Dorsolateral prefrontal cortex (tissue), 120 donors: ENCODE measurements at regions of chr2 and their contacts with region 1.

Region 1: DNA sequence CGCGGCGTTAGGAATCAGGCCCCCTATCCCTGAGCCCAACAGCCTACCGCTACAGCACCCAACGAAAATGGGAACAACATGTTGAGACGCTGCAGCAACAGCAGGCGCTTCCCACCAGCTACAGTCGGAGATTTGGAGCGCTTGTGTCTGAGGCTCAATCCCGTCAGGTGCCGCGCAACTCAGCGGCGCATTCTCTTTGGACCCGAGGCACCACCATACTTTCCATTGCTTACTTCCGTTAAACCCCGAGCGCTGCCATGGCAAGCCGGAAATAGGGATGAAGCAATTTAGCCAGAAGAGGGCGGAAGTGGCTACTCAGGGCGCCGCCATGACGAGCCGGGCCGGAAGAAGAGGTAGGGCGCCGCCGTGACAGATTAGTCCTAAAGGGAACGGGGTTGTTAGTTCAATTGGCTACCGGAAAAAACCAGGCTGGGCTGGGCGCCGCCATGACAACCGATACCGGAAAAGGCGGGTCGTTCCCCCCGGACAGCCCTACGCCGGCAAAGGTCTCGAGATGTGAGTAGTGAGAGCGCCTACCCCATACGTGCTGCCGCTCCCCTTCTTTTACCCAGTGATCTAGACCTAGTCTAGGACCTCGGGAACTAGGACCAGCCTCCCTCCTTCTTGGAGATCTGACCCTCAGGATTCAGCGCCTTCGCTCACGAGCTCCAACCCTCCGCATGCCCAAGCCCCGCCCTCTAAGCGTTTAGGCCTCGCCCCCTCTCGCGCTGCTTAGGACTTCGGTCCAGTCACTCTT is at the start of gene CHCHD5:
- DNase-seq: peak; percentile 89 to 99 (median 96)
- H3K4me3 ChIP-seq: peak within 1 kb of the TSS; percentile 52 to 95 (median 81)
- H3K27ac ChIP-seq: peak within 1 kb of the TSS; percentile 72 to 99 (median 96)
- H3K27me3 ChIP-seq: no peaks in the 10 kb centered on the region
- CTCF ChIP-seq: peak in 55 of 56 donors; percentile 38 to 83 (median 64)
- total RNA-seq, gene CHCHD5: 8.2 to 25.8 (median 17.1) TPM

Region 2: DNA sequence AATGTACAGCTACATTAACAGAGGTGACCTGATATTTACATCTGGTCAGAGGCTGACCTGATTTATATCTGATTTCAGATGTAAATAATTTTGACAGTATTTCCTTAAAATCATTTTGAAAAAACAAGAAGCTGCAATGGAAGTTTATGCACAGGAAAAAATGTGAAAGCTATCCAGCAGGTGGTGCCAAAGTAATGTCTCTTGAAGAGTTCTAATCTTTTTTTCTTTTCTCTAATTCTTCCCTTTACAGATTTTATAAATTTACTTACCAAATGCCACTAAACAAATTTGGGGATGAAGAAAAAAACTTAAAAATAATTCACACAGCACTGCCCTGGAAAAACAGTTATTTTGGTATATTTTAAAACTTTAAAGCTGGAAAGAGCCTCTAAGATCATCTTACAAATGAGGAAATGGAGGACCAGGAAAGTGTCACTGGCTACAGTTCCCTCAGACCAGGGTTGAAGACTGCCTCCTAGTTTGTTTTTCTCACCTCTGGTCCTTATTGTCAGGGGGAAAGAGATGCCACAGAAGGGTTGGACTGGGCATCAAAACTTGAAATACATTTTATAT is 462.5 kb before region 1 on chr2:
- intact Hi-C with region 1: loop called in 1 of 2 experiments (anchors 5 kb)
- DNase-seq: no peak
- H3K4me3 ChIP-seq: no peak overlapping the region
- H3K27ac ChIP-seq: no peak overlapping the region
- H3K27me3 ChIP-seq: no peaks in the 10 kb centered on the region
- CTCF ChIP-seq: peak; percentile 48 to 82 (median 70)

Region 3: DNA sequence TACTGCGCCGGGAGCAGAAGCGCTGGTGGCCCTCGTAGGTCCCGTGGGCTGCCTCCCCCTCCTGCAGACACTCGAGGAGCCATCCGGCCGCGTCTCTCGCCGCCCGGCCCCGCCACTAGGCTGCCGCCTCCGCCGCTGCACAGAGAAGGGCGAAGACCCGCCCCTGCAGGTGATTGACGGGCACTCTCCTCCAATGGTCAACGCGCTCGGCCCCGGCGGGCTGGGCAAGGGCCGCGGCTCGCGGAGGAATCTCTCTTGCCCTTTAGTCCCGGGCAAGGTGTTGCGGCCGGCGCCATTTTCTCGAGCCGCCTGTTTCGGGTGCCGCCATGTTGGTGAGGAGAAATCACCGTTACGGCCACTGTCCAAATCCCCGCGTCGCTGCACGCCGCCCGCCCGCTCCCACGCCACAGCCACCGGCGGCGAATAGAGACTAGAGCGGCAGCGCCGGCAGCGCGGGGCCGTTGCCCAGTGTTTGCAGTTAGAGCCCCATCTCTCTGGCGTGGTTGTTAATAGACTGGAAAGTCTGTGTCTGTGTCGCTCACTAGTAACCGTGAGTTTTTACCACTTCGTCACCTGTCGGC is 308.9 kb before region 1 on chr2 and contains the start of gene ZC3H6:
- intact Hi-C with region 1: loop called (anchors 5 kb)
- DNase-seq: peak; percentile 97 to 100 (median 99)
- H3K4me3 ChIP-seq: peak within 1 kb of the TSS; percentile 68 to 99 (median 90)
- H3K27ac ChIP-seq: peak within 1 kb of the TSS; percentile 98 to 100 (median 100)
- H3K27me3 ChIP-seq: no peaks in the 10 kb centered on the region
- CTCF ChIP-seq: peak in 49 of 56 donors; percentile 9 to 68 (median 42)
- total RNA-seq, gene ZC3H6: 20.4 to 50.4 (median 36.4) TPM

Region 4: DNA sequence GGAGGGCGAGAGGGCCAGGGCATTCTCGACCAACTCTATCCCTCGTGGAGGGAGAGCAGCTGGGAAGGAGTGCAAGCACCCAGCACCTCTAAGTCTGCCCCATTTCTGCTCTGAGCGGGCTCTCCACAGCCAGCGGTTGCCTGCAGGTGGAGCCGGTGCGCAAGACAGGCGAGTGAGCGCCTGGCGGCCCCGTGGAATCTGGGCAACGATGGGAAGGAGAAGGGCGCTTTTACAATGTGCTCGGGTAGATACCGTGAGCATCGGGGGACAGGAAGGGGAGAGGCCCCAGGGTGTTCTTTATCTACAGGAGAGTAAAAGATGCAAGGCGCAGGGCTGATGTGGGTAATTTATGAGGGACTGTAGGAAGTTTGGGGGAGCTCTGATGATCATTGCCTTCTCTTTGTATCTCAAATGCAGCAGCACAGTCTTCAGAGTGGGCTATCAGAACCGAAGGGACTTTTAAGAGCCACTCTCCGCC is 103.2 kb before region 1 on chr2:
- intact Hi-C with region 1: loop called (anchors 1 kb)
- DNase-seq: peak; percentile 77 to 92 (median 86)
- H3K4me3 ChIP-seq: peak overlapping the region; percentile 57 to 97 (median 83)
- H3K27ac ChIP-seq: peak overlapping the region; percentile 74 to 97 (median 91)
- H3K27me3 ChIP-seq: no peaks in the 10 kb centered on the region
- CTCF ChIP-seq: peak; percentile 51 to 95 (median 83)

Region 5: DNA sequence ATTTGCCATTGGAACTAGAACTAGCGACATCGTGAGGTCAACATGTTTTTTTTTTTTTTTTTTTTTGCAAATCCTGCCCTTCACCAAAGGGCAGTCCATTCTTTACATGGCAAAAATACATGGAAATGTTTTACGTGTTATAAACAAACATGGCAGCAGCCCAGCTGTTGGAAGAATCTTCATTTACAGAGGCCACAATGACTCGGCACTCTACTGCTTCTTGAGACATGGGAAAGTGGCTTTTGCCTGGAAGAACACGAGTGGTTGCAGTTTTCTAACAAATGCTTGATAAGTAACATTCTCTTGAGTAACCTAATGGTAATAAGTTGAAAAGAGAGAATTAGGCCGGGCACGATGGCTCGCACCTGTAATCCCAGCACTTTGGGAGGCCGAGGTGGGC is 64.8 kb before region 1 on chr2:
- intact Hi-C with region 1: no loop called
- DNase-seq: no peak
- H3K4me3 ChIP-seq: no peak overlapping the region
- H3K27ac ChIP-seq: no peak overlapping the region
- H3K27me3 ChIP-seq: no peaks in the 10 kb centered on the region
- CTCF ChIP-seq: no peak

Region 6: GRCh38 chr2:112645310-112646101 is 61.2 kb after region 1 on chr2 and contains the start of gene SLC20A1:
- intact Hi-C with region 1: loop called (anchors 5 to 10 kb)
- DNase-seq: peak; percentile 93 to 100 (median 97)
- H3K4me3 ChIP-seq: peak within 1 kb of the TSS; percentile 71 to 99 (median 93)
- H3K27ac ChIP-seq: peak within 1 kb of the TSS; percentile 86 to 99 (median 97)
- H3K27me3 ChIP-seq: no peaks in the 10 kb centered on the region
- CTCF ChIP-seq: peak in 50 of 56 donors; percentile 16 to 63 (median 43)
- total RNA-seq, gene SLC20A1: 41.1 to 97.4 (median 66.6) TPM

Region 7: DNA sequence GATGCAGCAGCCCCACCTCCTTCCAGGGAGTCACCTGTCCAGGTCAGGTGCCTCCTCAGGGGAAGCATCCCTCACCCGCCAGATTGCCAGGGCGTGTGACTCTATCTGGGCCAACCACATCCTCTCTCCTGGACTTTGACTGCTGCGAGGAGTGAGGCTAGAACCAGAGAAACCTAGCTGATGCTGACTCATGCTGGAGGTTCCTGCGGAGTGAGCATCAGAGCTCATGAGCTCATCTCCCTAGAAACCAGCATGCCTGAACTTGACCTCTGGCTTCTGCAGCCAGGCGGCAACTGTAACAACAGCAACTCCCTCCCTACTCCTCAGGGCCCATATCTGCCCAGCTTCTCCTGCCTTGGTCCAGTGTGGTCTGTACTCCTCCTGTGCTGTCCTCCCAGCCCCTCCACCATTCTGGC is 108.2 kb after region 1 on chr2:
- intact Hi-C with region 1: no loop called
- DNase-seq: peak in 4 of 10 donors; percentile 26 to 61 (median 37)
- H3K4me3 ChIP-seq: no peak overlapping the region
- H3K27ac ChIP-seq: peak overlapping the region in 51 of 59 donors; percentile 2 to 85 (median 49)
- H3K27me3 ChIP-seq: no peaks in the 10 kb centered on the region
- CTCF ChIP-seq: no peak